Panc1 (cell line): ENCODE measurements at regions of chr10 and their contacts with region 1.

Region 1: GRCh38 chr10:115355162-115355760 is 262.1 kb downstream of the ATRNL1 start:
- DNase-seq: peak; percentile 47
- ATAC-seq: peak; percentile 94
- H3K4me3 ChIP-seq: no peak overlapping the region
- H3K27ac ChIP-seq: no peak overlapping the region
- H3K4me1 ChIP-seq: no peaks in the 10 kb centered on the region
- H3K27me3 ChIP-seq: no peaks in the 10 kb centered on the region
- CTCF ChIP-seq: peak; percentile 86

Region 2: GRCh38 chr10:115171392-115171960 is 183.8 kb before region 1 on chr10:
- CTCF ChIA-PET with region 1: no interaction called
- POLR2A ChIA-PET with region 1: no interaction called
- in situ Hi-C with region 1: no loop called
- intact Hi-C with region 1: loop called (anchors 10 kb)
- DNase-seq: no peak
- ATAC-seq: no peak; the same call in 1 of the 2 replicates
- H3K4me3 ChIP-seq: no peak overlapping the region
- H3K27ac ChIP-seq: no peak overlapping the region
- H3K4me1 ChIP-seq: no peaks in the 10 kb centered on the region
- H3K27me3 ChIP-seq: no peaks in the 10 kb centered on the region
- CTCF ChIP-seq: peak; percentile 48; the same call in 1 of the 2 replicates